Activated CD4-positive, alpha-beta T cell treated with anti-CD3 and anti-CD28 coated beads, Interleukin-2, amount 10 ng/mL, durations not matched to agents 24 days and 14 days (primary cell): ENCODE measurements at regions of chr16 and their contacts with region 1.

Region 1: GRCh38 chr16:58000706-58001676 is at the start of gene USB1:
- DNase-seq: peak; percentile 97
- H3K4me3 Mint-ChIP-seq: peak within 1 kb of the TSS; percentile 96
- H3K27ac Mint-ChIP-seq: peak within 1 kb of the TSS; percentile 89
- H3K4me1 Mint-ChIP-seq: peaks cover 34% of the 10 kb centered on the region
- H3K27me3 Mint-ChIP-seq: no peaks in the 10 kb centered on the region
- total RNA-seq, gene USB1: 50.9 and 54.4 TPM in 2 replicates

Region 2: GRCh38 chr16:57757326-57757786 is 243.6 kb before region 1 on chr16:
- intact Hi-C with region 1: loop called (anchors 1 kb)
- DNase-seq: peak; percentile 97
- H3K4me3 Mint-ChIP-seq: no peak overlapping the region
- H3K27ac Mint-ChIP-seq: no peak overlapping the region
- H3K4me1 Mint-ChIP-seq: no peaks in the 10 kb centered on the region
- H3K27me3 Mint-ChIP-seq: no peaks in the 10 kb centered on the region

Region 3: DNA sequence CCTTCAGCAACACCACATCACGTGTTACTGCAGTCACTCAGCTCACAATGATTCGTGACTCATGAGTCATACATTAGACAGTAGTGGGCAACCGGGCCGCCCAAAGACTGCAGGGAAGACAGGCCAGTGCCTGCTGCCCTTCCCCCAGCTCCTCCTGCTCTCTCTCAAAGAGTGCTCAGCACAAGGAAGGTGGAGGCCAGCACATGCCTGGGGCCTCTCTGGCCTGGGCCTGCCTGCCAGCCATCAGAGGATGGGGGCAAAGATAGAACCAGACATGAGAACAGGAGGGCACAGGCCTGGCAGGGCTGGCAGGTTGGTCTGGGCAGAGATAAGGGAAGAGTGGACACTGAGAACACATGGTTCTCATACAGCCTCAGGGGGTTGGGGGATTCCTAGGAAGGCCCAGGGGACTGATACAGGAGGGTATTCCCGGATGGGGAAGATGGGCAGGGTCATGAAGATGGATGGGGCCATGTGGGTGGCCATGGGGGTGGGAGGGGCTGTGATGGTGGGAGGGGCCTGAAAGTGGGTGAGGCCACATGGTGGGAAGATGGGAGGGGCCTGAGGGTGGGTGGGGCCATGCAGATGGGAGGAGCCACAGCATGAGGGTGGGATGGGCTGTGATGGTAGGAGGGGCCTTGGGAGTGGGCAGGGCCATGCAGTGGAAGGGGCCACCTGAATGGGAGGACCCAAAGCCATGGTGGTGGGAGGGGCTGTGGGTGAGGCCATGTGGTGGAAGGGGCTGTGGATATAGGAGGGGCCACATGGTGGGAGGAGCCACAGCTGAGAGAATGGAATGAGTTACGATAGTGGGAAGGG is 236.4 kb before region 1 on chr16:
- intact Hi-C with region 1: loop called (anchors 2 kb)
- DNase-seq: peak; percentile 74
- H3K4me3 Mint-ChIP-seq: no peak overlapping the region
- H3K27ac Mint-ChIP-seq: no peak overlapping the region
- H3K4me1 Mint-ChIP-seq: peaks cover 3% of the 10 kb centered on the region
- H3K27me3 Mint-ChIP-seq: no peaks in the 10 kb centered on the region

Region 4: GRCh38 chr16:57899771-57900661 is 101.0 kb before region 1 on chr16:
- intact Hi-C with region 1: loop called (anchors 1 kb)
- DNase-seq: peak; percentile 93
- H3K4me3 Mint-ChIP-seq: no peak overlapping the region
- H3K27ac Mint-ChIP-seq: no peak overlapping the region
- H3K4me1 Mint-ChIP-seq: peaks cover 3% of the 10 kb centered on the region
- H3K27me3 Mint-ChIP-seq: peaks cover 9% of the 10 kb centered on the region

Region 5: GRCh38 chr16:57984331-57985203 is 16.4 kb before region 1 on chr16:
- intact Hi-C with region 1: loop called (anchors 1 kb)
- DNase-seq: peak; percentile 97
- H3K4me3 Mint-ChIP-seq: peak overlapping the region; percentile 91
- H3K27ac Mint-ChIP-seq: peak overlapping the region; percentile 65
- H3K4me1 Mint-ChIP-seq: peaks cover 8% of the 10 kb centered on the region
- H3K27me3 Mint-ChIP-seq: peaks cover 13% of the 10 kb centered on the region

Region 6: DNA sequence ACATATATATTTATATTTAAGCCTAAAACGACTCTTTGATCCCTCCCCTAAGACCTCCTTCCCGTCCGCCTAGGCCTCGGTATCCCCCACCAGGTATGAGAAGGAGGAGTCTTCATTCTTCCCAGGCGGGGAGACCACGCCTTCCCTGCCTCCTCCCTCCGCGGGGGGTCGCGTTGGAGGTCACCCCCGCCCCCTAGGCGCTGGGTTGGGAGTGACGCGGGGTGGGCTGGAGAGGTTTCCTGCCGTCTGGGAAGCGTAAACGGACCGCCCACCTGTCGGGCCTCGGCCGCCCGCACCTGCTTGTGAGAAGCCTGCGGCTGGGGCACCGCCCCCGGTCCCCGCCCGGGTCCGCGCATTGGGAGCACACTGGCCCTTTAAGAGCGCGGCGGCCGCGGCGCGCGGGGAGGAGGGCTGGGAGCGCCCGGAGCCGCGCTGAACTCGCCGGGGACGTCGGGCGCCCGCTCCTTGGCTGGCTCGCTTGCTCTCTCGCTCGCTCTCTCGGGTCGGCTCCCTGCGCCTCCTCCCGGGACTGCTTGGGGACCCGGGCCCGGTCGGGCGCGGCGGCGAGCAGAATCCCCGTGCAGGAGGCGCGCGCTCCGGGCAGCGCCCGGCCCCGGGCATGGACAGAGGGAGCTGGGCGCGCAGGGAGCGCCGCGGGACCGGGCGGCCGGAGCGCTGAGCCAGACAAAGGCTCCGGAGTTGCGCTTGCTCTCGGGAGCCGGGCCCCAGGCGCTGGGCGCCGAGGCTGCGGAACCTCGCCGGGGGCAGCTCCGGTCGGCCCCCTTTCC is 24.6 kb after region 1 on chr16 and contains the start of gene MMP15:
- intact Hi-C with region 1: loop called (anchors 1 kb)
- DNase-seq: peak; percentile 89
- H3K4me3 Mint-ChIP-seq: peak within 1 kb of the TSS; percentile 88
- H3K27ac Mint-ChIP-seq: peak within 1 kb of the TSS; percentile 70
- H3K4me1 Mint-ChIP-seq: peaks cover 12% of the 10 kb centered on the region
- H3K27me3 Mint-ChIP-seq: peaks cover 26% of the 10 kb centered on the region
- total RNA-seq, gene MMP15: 0.89 and 1.1 TPM in 2 replicates

Region 7: GRCh38 chr16:58481931-58482330 is 480.9 kb after region 1 on chr16:
- intact Hi-C with region 1: no loop called
- DNase-seq: no peak
- H3K4me3 Mint-ChIP-seq: no peak overlapping the region
- H3K27ac Mint-ChIP-seq: no peak overlapping the region
- H3K4me1 Mint-ChIP-seq: no peaks in the 10 kb centered on the region
- H3K27me3 Mint-ChIP-seq: peaks cover 5% of the 10 kb centered on the region